Activated naive CD4-positive, alpha-beta T cell treated with anti-CD3 and anti-CD28 coated beads for 36 hours (primary cell): ENCODE measurements at regions of chr2 and their contacts with region 1.

Region 1: DNA sequence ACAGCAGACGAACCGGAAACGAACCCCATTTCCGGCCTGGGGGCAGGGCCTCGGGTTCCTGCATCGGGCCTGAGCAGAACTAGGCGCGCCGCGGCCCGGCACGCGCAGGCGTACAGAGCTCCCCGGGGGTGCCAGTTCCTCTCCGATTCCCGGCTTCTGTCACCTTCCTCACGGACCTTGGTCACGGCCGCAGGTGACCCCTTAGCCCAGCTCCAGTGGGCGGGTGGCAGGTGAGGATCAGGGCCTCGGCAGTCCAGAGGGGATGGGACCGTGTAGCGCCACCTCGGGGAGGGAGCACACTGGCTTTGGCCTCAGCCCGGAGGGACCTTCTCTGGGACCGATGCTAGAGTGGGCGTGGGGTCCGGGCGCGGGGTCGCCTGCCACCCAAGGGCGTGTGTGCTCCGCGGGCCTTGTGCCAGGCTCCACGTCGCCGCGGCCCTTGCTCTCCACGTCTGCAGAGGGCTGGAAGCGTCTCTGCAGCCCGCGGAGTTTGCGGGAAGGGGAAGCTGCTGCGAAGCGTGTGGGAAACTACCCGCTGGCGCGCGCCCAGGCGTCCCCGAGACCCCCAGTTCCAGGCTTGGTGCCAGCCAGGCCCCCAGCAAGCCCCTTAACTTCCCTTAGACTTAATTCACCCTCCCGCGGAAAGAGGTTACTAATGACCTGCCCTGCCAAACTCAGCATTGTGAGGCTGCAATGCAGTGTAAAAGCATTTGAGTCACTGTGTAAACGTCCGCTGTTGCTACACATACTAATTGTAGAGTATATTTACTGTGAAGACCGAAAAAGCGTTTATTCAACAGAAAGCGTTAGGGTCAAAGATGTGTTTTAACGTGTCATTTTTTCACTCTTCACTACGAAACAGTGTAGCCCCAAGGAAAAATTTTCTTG is at the start of gene TRAPPC12:
- DNase-seq: peak; percentile 93
- H3K4me3 Mint-ChIP-seq: peak within 1 kb of the TSS; percentile 97
- H3K27ac Mint-ChIP-seq: peak within 1 kb of the TSS; percentile 94
- H3K4me1 Mint-ChIP-seq: peaks cover 49% of the 10 kb centered on the region
- H3K27me3 Mint-ChIP-seq: no peaks in the 10 kb centered on the region
- total RNA-seq, gene TRAPPC12: 44.3 to 45.8 TPM

Region 2: DNA sequence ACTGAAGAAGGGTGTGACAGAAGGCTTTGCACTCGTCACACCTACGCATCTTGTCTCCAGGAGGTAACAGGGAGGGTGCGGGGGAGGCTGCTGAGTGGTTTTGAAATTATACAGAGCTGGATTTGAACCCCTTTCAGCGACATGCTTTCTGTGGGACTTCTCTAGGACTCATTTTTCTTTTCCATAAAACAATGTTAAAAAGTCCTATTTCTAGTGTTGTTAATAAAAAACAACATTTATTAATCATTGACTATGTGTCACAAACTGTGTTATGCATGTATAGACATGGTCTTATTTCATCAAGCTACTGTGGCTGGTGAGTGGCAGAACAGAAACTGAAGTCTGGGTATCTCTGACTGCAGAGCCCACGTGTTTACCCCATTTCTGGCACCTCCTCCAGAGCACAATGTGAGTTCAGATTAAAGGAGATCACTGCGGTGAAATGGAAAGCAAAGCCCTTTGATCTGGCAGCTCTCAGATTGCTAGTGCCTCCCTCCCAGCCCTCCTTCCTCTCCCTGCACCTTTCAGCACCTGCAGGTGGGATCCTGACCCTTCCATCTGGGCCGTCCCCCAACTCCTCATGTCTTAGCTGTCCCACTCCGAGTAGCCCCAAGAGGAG is 733.3 kb before region 1 on chr2:
- CTCF ChIA-PET with region 1: no interaction called
- intact Hi-C with region 1: loop called (anchors 1 kb)
- DNase-seq: peak; percentile 75
- H3K4me3 Mint-ChIP-seq: peak overlapping the region; percentile 8
- H3K27ac Mint-ChIP-seq: peak overlapping the region; percentile 69
- H3K4me1 Mint-ChIP-seq: peaks cover 40% of the 10 kb centered on the region
- H3K27me3 Mint-ChIP-seq: no peaks in the 10 kb centered on the region

Region 3: GRCh38 chr2:3179208-3179607 is 200.7 kb before region 1 on chr2:
- CTCF ChIA-PET with region 1: no interaction called
- intact Hi-C with region 1: no loop called
- DNase-seq: peak; percentile 60
- H3K4me3 Mint-ChIP-seq: no peak overlapping the region
- H3K27ac Mint-ChIP-seq: no peak overlapping the region
- H3K4me1 Mint-ChIP-seq: no peaks in the 10 kb centered on the region
- H3K27me3 Mint-ChIP-seq: no peaks in the 10 kb centered on the region

Region 4: GRCh38 chr2:3242747-3243369 is 137.0 kb before region 1 on chr2:
- CTCF ChIA-PET with region 1: no interaction called
- intact Hi-C with region 1: loop called (anchors 1 kb)
- DNase-seq: peak; percentile 72
- H3K4me3 Mint-ChIP-seq: no peak overlapping the region
- H3K27ac Mint-ChIP-seq: peak overlapping the region; percentile 32
- H3K4me1 Mint-ChIP-seq: peaks cover 9% of the 10 kb centered on the region
- H3K27me3 Mint-ChIP-seq: no peaks in the 10 kb centered on the region

Region 5: DNA sequence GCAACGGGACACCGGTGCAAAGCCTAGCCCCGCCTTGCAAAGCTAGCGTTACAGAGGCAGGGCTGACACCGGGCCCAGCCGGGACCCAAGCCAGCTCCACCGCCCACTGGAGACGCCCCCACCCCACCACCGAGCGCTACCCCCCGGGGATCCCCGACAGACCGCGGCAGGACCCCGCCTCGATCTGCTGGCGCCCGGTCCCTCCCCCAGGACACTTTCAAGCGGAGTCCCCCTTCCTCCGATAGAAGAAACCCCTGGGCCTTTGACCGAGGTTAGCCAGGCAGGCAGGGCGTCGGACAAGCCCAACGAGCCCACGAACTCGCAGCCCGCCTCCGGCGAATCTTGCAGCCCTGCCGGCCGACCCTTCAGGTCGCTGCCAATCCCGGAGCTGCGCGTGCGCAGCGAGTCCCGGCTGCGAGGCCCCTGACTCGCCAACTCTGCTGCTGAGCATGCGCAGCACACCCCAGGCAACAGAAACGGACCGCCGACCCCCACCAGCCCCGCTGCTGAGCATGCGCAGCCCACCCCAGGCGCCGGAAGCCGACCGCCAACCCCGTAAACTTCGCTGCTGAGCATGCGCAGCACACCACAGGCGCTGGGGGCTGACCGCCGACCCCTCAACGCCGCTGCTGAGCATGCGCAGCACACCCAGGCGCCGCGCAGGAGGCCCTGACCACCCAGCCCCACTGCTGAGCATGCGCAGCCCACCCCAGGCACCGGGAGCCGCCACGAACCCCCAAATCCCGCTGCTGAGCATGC is 138.8 kb after region 1 on chr2:
- CTCF ChIA-PET with region 1: no interaction called
- intact Hi-C with region 1: loop called (anchors 1 kb)
- DNase-seq: peak; percentile 96
- H3K4me3 Mint-ChIP-seq: peak overlapping the region; percentile 84
- H3K27ac Mint-ChIP-seq: peak overlapping the region; percentile 85
- H3K4me1 Mint-ChIP-seq: peaks cover 27% of the 10 kb centered on the region
- H3K27me3 Mint-ChIP-seq: no peaks in the 10 kb centered on the region

Region 6: DNA sequence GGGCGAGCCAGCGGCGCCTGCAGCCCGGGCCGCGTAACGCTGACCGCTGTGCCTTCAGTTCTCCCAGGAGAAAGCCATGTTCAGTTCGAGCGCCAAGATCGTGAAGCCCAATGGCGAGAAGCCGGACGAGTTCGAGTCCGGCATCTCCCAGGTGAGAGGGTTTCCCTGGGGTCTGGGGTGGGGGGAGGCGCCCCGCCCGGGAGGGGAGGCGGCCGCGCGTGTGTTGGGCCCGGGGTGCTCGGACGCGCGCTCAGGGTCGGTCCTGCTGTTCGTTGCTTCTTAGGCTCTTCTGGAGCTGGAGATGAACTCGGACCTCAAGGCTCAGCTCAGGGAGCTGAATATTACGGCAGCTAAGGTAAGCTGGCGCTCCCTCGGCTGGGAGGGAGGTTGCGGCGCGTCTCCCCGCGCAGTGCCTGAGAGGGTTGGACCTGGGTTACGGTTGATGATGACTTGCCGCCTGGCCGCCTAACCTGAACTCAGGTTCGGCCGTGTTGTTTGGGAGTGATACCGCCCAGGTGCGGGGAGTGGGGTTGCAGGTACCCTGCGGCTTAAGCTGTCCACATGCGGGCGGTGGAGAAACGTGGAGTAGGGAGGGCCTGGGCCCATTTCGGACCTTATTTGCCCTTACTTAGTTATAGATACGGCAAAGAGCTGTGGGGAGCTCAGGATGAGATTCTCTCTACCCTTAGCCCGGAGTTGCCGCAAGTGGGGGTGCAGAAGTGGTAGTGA is 195.8 kb after region 1 on chr2:
- CTCF ChIA-PET with region 1: interaction called, 3 read pairs
- intact Hi-C with region 1: loop called (anchors 1 kb)
- DNase-seq: peak; percentile 27
- H3K4me3 Mint-ChIP-seq: peak overlapping the region; percentile 88
- H3K27ac Mint-ChIP-seq: peak overlapping the region; percentile 91
- H3K4me1 Mint-ChIP-seq: peaks cover 50% of the 10 kb centered on the region
- H3K27me3 Mint-ChIP-seq: no peaks in the 10 kb centered on the region